ENCODE measurements at regions of chr7 and their contacts with region 1.

Region 1: GRCh38 chr7:134514663-134515062 is 12.7 kb upstream of the AKR1B10 start:
- DNase-seq: peak; percentile 41
- H3K4me3 ChIP-seq: no peak overlapping the region
- H3K27ac ChIP-seq: no peak overlapping the region
- H3K4me1 ChIP-seq: no peaks in the 10 kb centered on the region
- H3K27me3 ChIP-seq: peaks cover 3% of the 10 kb centered on the region
- CTCF ChIP-seq: peak; percentile 70 to 79 (median 74)
- POLR2A ChIP-seq: no peak

Region 2: DNA sequence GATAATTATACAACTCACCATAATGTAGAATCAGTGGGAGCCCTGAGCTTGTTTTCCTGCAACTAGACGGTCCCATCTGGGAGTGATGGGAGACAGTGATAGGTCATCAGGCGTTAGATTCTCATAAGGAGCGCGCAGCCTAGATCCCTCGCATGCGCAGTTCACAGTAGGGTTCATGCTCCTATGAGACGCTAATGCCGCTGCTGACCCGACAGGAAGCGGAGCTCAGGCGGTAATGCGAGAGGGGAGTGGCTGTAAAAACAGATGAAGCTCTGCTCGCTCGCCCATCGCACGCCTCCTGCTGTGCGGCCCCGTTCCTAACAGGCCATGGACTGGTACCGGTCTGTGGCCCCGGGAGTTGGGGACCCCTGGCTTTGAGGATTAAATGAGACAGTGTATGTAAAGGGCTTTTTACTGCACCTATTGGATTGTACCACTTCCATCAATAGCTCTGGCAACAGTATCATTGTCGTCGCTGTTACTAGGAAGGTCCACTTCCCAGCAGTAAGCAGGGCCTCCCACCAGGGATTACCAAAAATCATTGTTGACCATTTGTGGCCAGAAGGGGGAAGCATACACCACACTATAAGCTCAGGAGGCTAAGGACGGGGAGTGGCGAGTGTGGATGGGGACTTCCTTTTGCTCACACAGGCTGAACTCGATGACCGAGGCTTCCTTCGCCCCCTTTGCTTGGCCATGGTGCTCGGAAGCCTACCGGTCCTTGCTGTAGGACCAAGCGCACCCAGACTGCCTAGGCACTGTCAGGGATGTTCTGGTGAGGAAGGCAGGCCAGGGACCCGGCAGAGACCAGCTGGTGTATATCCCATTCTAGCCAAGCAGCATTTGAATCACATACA is 82.1 kb before region 1 on chr7:
- intact Hi-C with region 1: loop called (anchors 1 kb)
- DNase-seq: peak; percentile 72
- H3K4me3 ChIP-seq: peak overlapping the region; percentile 7 to 19
- H3K27ac ChIP-seq: peak overlapping the region; percentile 47 to 53
- H3K4me1 ChIP-seq: no peaks in the 10 kb centered on the region
- H3K27me3 ChIP-seq: no peaks in the 10 kb centered on the region
- CTCF ChIP-seq: peak; percentile 44 to 90 (median 82)
- POLR2A ChIP-seq: peak; percentile 31

Region 3: GRCh38 chr7:134533288-134533771 is 18.7 kb after region 1 on chr7:
- intact Hi-C with region 1: no loop called
- DNase-seq: no peak
- H3K4me3 ChIP-seq: no peak overlapping the region
- H3K27ac ChIP-seq: no peak overlapping the region
- H3K4me1 ChIP-seq: no peaks in the 10 kb centered on the region
- H3K27me3 ChIP-seq: no peaks in the 10 kb centered on the region
- CTCF ChIP-seq: no peak
- POLR2A ChIP-seq: no peak

Region 4: DNA sequence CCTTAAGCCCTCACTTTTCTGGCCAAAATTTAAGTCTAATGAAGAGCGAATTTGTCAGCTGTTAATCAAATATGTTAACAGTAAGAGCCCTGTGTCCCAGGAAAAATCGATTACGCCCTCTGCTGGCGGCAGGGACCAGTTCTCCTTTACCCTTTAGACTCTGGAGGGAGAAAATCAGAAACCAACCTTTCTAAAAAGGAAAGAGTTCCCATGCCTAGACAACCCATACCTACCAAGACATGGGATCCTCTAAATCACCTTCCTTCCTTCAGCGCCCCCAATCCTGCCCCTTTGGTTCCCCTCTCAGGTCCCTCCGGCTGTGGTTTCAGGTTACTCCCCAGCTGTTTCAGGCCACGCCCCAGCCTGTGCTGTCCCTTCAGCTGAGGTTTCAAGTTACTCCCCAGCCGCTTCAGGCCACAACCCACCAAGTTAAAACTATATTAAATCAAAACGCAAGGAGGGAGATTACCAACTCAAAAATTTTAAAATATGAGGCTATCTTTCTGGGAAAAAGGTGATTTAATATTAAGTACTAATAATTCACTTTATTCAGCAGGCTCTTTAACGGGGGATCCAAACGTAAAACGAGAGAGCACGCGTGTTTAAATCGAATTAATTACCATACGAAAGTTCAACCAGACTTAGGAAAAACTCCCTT is 32.9 kb after region 1 on chr7:
- intact Hi-C with region 1: loop called (anchors 5 kb)
- DNase-seq: peak; percentile 62
- H3K4me3 ChIP-seq: peak overlapping the region in 1 of 2 donors; percentile 12
- H3K27ac ChIP-seq: peak overlapping the region in 1 of 2 donors; percentile 18
- H3K4me1 ChIP-seq: no peaks in the 10 kb centered on the region
- H3K27me3 ChIP-seq: no peaks in the 10 kb centered on the region
- CTCF ChIP-seq: peak; percentile 47 to 85 (median 74)
- POLR2A ChIP-seq: no peak